ENCODE measurements at regions of chr12 and their contacts with region 1.

Region 1: GRCh38 chr12:109844983-109845823 is 12.0 kb upstream of the TRPV4 start:
- DNase-seq: peak; percentile 70 to 93 (median 84)
- ATAC-seq: peak; percentile 98
- H3K4me3 ChIP-seq: peak overlapping the region; percentile 28
- H3K4me3 Mint-ChIP-seq: peak overlapping the region; percentile 48
- H3K27ac ChIP-seq: no peak overlapping the region
- H3K27ac Mint-ChIP-seq: no peak overlapping the region
- H3K4me1 ChIP-seq: peaks cover 8% of the 10 kb centered on the region
- H3K4me1 Mint-ChIP-seq: no peaks in the 10 kb centered on the region
- H3K27me3 ChIP-seq: no peaks in the 10 kb centered on the region
- H3K27me3 Mint-ChIP-seq: no peaks in the 10 kb centered on the region
- CTCF ChIP-seq: peak; percentile 93

Region 2: GRCh38 chr12:109518820-109519665 is 326.2 kb before region 1 on chr12:
- CTCF ChIA-PET with region 1: no interaction called
- POLR2A ChIA-PET with region 1: no interaction called
- intact Hi-C with region 1: loop called in 1 of 2 experiments (anchors 2 kb)
- DNase-seq: peak; percentile 27 to 72 (median 44)
- ATAC-seq: peak; percentile 63
- H3K4me3 ChIP-seq: no peak overlapping the region
- H3K4me3 Mint-ChIP-seq: no peak overlapping the region
- H3K27ac ChIP-seq: no peak overlapping the region
- H3K27ac Mint-ChIP-seq: no peak overlapping the region
- H3K4me1 ChIP-seq: no peaks in the 10 kb centered on the region
- H3K4me1 Mint-ChIP-seq: no peaks in the 10 kb centered on the region
- H3K27me3 ChIP-seq: no peaks in the 10 kb centered on the region
- H3K27me3 Mint-ChIP-seq: no peaks in the 10 kb centered on the region
- CTCF ChIP-seq: peak; percentile 72

Region 3: GRCh38 chr12:109597795-109598427 is 247.3 kb before region 1 on chr12:
- CTCF ChIA-PET with region 1: interaction called, 3 read pairs
- POLR2A ChIA-PET with region 1: no interaction called
- intact Hi-C with region 1: loop called in 1 of 2 experiments (anchors 5 kb)
- DNase-seq: peak; percentile 35 to 74 (median 52)
- ATAC-seq: peak; percentile 65
- H3K4me3 ChIP-seq: no peak overlapping the region
- H3K4me3 Mint-ChIP-seq: no peak overlapping the region
- H3K27ac ChIP-seq: no peak overlapping the region
- H3K27ac Mint-ChIP-seq: no peak overlapping the region
- H3K4me1 ChIP-seq: peaks cover 23% of the 10 kb centered on the region
- H3K4me1 Mint-ChIP-seq: peaks cover 26% of the 10 kb centered on the region
- H3K27me3 ChIP-seq: no peaks in the 10 kb centered on the region
- H3K27me3 Mint-ChIP-seq: no peaks in the 10 kb centered on the region
- CTCF ChIP-seq: peak; percentile 93

Region 4: DNA sequence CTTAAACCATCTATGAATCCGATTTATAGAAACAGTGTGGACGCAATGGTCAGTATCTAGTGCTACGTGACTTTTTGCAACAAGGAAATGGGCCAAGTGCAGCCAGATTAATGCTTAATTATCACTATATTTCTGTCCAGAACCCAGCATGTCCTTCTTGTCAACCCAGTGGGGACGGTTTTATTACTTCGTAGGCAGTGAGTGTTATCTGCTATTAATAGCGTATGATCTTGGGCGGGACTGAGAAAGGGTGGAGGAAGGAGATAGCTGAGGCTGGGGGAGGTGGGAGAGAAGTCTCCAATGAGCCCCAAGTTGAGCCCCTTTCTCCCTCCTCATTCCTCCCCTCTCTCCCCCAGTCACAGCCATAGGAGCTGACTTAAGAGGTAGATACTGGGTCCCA is 191.3 kb before region 1 on chr12:
- CTCF ChIA-PET with region 1: no interaction called
- POLR2A ChIA-PET with region 1: no interaction called
- intact Hi-C with region 1: no loop called
- DNase-seq: no peak
- ATAC-seq: no peak
- H3K4me3 ChIP-seq: no peak overlapping the region
- H3K4me3 Mint-ChIP-seq: no peak overlapping the region
- H3K27ac ChIP-seq: no peak overlapping the region
- H3K27ac Mint-ChIP-seq: no peak overlapping the region
- H3K4me1 ChIP-seq: no peaks in the 10 kb centered on the region
- H3K4me1 Mint-ChIP-seq: no peaks in the 10 kb centered on the region
- H3K27me3 ChIP-seq: peaks cover 10 to 13% of the 10 kb centered on the region in 2 experiments
- H3K27me3 Mint-ChIP-seq: peaks cover 20% of the 10 kb centered on the region
- CTCF ChIP-seq: no peak

Region 5: DNA sequence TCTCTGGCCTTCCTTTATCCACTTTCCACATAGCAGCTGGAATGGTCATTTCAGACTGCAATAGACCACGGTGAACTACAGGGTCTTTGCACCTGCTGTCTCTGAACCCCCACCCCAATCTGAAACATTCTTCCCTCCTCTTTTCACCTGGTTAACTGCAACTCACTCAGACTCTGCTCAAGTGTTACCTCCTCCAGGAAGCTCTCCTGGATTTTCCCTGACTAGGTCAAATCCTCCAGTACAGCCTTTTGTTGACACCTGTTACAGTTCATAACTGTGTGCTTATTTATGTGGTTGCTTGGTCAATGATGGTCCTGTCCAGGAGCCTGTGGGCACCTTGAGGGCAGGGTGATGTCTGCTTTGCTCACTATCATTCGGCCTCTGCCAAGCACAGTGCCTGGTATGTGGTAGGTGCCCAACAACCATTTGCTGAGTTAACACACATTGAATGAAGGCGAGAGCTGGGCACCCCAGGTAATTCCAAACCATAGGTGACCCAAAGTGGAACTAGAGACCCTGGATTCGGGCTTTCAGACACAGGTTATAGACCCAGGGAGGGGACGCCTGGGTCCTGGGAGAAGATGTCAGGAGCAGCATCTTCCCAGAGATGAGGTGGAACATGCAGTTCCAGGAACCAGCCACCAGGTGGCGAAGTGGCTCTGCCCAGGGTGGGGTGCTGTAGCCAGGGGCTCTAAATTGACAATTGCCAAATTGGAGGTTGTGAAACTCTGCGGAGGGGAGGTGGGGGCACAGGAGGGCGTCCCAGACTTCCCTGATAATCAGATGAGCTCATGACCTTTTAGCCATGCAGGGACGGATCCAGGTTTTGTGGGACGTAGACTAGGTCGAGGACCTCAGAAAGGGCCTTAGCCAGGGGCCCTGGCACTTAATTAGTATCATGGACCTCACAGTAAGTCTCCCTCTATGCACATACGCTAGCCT is 40.1 kb before region 1 on chr12:
- CTCF ChIA-PET with region 1: interaction called, 16 read pairs
- POLR2A ChIA-PET with region 1: no interaction called
- intact Hi-C with region 1: loop called (anchors 1 kb)
- DNase-seq: peak; percentile 53 to 81 (median 62)
- ATAC-seq: peak; percentile 82
- H3K4me3 ChIP-seq: no peak overlapping the region
- H3K4me3 Mint-ChIP-seq: no peak overlapping the region
- H3K27ac ChIP-seq: no peak overlapping the region
- H3K27ac Mint-ChIP-seq: no peak overlapping the region
- H3K4me1 ChIP-seq: peaks cover 6% of the 10 kb centered on the region
- H3K4me1 Mint-ChIP-seq: no peaks in the 10 kb centered on the region
- H3K27me3 ChIP-seq: no peaks in the 10 kb centered on the region
- H3K27me3 Mint-ChIP-seq: peaks cover 5% of the 10 kb centered on the region
- CTCF ChIP-seq: peak; percentile 97

Region 6: GRCh38 chr12:109858764-109859163 is 13.6 kb after region 1 on chr12:
- CTCF ChIA-PET with region 1: interaction called, 20 read pairs
- POLR2A ChIA-PET with region 1: no interaction called
- intact Hi-C with region 1: no loop called
- DNase-seq: no peak
- ATAC-seq: no peak
- H3K4me3 ChIP-seq: no peak overlapping the region
- H3K4me3 Mint-ChIP-seq: no peak overlapping the region
- H3K27ac ChIP-seq: no peak overlapping the region
- H3K27ac Mint-ChIP-seq: no peak overlapping the region
- H3K4me1 ChIP-seq: peaks cover 1% of the 10 kb centered on the region
- H3K4me1 Mint-ChIP-seq: peaks cover 3% of the 10 kb centered on the region
- H3K27me3 ChIP-seq: no peaks in the 10 kb centered on the region
- H3K27me3 Mint-ChIP-seq: no peaks in the 10 kb centered on the region
- CTCF ChIP-seq: no peak

Measured in CD4-positive, alpha-beta T cell (primary cell).